Panc1 (cell line): ENCODE measurements at regions of chr9 and their contacts with region 1.

Region 1: DNA sequence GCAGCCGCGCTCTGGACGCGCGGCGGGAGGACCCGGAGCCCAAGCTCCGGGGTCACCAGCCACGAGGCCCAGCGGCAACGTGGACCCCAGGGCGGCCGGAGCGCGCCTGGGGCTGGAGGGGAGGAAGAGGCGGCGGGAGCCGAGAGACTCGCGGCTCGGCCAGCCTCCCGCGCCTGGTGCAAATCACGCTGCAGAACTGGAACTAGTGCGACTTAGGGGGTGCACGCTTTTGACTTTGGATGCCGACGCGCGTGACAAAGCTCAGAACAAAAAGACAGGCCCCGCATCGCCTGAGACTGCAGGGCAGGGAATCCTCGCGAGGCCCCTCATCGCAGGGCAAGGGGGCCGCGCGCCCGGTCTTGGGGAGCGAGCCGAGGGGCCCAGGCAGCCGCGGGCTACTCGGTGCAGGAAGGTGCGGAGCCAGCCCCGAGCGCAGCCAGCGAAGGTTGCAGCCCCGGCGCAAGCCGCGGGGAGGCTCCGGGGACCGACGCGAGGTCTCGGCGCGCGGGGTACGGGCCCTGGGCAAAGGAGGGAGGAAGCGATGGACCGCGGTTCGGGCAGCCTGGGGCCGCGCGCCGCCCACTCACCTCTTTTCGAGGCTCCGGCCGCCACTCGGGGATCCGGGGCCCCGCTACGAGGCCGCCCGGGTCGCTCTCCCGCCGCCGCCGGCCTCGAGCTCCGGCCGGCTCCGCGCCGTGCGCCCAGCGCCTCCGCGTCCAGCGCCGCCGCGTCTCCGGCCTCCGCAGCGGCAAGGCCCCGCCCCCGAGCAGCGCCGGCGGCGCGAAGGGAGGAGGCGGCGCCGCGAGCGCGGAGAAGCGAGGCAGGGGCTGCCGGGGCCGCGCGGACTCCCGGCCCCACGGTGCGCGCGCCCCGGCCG is at the start of gene GOLM1:
- DNase-seq: no peak
- ATAC-seq: peak; percentile 93
- H3K4me3 ChIP-seq: peak within 1 kb of the TSS; percentile 72 to 76
- H3K27ac ChIP-seq: peak within 1 kb of the TSS; percentile 73
- H3K4me1 ChIP-seq: peaks cover 24% of the 10 kb centered on the region
- H3K27me3 ChIP-seq: no peaks in the 10 kb centered on the region
- CTCF ChIP-seq: no peak; the same call in 1 of the 2 replicates
- total RNA-seq, gene GOLM1: 73.4 TPM

Region 2: GRCh38 chr9:86126998-86127972 is 28.2 kb after region 1 on chr9:
- CTCF ChIA-PET with region 1: no interaction called
- POLR2A ChIA-PET with region 1: interaction called, 5 read pairs
- in situ Hi-C with region 1: no loop called
- intact Hi-C with region 1: loop called (anchors 1 kb)
- DNase-seq: peak; percentile 91
- ATAC-seq: peak; percentile 97
- H3K4me3 ChIP-seq: peak overlapping the region in 1 of 2 experiments; percentile 39; a peak in 2 of 4 replicates
- H3K27ac ChIP-seq: peak overlapping the region; percentile 54
- H3K4me1 ChIP-seq: peaks cover 19% of the 10 kb centered on the region
- H3K27me3 ChIP-seq: no peaks in the 10 kb centered on the region
- CTCF ChIP-seq: no peak

Region 3: DNA sequence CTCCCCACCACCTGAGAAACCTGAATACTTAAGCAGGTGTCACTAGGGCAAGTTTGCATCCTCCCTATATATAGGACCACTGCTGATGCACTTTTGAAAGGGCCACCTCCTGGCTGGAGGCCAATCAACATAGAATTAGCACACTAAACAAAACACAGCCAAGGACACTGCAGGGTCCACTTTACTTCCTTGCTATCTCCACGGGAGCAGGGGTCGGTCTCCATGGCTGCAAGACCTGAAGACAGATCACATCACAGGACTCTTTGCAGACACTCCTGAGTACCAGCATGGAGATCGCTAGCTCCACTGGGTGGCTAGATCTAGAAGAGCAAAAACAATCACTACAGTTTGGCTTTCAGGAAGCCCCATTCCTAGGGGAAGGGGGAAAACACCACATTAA is 88.1 kb after region 1 on chr9:
- CTCF ChIA-PET with region 1: no interaction called
- POLR2A ChIA-PET with region 1: no interaction called
- in situ Hi-C with region 1: no loop called
- intact Hi-C with region 1: loop called (anchors 10 kb)
- DNase-seq: no peak
- ATAC-seq: no peak
- H3K4me3 ChIP-seq: no peak overlapping the region
- H3K27ac ChIP-seq: no peak overlapping the region
- H3K4me1 ChIP-seq: no peaks in the 10 kb centered on the region
- H3K27me3 ChIP-seq: no peaks in the 10 kb centered on the region
- CTCF ChIP-seq: no peak; the same call in 1 of the 2 replicates

Region 4: DNA sequence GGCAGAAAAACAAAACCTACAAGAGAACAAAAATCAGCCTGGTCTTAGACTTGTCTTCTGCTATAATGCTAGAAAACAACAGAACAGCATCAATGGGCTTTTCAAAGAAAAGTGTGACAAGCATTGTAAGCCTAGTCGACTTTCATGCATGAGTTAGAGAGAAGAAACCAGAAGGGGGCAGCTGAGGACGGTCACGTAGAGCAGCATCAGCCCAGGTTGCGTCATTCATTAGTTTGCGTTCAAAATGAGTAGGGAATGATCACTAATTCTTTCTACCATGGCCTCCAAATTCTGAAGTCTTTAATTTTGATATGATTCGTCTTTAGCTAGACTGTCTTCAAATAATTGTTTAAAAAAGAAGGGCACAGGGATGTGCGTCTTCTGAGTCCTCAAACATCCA is 188.0 kb after region 1 on chr9:
- CTCF ChIA-PET with region 1: no interaction called
- POLR2A ChIA-PET with region 1: no interaction called
- in situ Hi-C with region 1: no loop called
- intact Hi-C with region 1: no loop called
- DNase-seq: no peak
- ATAC-seq: no peak
- H3K4me3 ChIP-seq: no peak overlapping the region
- H3K27ac ChIP-seq: no peak overlapping the region
- H3K4me1 ChIP-seq: no peaks in the 10 kb centered on the region
- H3K27me3 ChIP-seq: no peaks in the 10 kb centered on the region
- CTCF ChIP-seq: peak; percentile 51